ENCODE measurements at regions of chr11 and their contacts with region 1.

Region 1: GRCh38 chr11:62726915-62727763 is at the start of gene HNRNPUL2:
- DNase-seq: peak; percentile 95
- ATAC-seq: peak; percentile 90
- H3K4me3 ChIP-seq: peak within 1 kb of the TSS; percentile 100
- H3K27ac ChIP-seq: peak within 1 kb of the TSS; percentile 94
- H3K4me1 ChIP-seq: no peaks in the 10 kb centered on the region; the same call in 1 of the 2 replicates
- H3K27me3 ChIP-seq: no peaks in the 10 kb centered on the region
- CTCF ChIP-seq: no peak
- EP300 ChIP-seq: no peak
- POLR2A ChIP-seq: peak; percentile 96
- RAD21 ChIP-seq: no peak
- polyA plus RNA-seq, gene HNRNPUL2: 1.6 to 7.4 TPM

Region 2: DNA sequence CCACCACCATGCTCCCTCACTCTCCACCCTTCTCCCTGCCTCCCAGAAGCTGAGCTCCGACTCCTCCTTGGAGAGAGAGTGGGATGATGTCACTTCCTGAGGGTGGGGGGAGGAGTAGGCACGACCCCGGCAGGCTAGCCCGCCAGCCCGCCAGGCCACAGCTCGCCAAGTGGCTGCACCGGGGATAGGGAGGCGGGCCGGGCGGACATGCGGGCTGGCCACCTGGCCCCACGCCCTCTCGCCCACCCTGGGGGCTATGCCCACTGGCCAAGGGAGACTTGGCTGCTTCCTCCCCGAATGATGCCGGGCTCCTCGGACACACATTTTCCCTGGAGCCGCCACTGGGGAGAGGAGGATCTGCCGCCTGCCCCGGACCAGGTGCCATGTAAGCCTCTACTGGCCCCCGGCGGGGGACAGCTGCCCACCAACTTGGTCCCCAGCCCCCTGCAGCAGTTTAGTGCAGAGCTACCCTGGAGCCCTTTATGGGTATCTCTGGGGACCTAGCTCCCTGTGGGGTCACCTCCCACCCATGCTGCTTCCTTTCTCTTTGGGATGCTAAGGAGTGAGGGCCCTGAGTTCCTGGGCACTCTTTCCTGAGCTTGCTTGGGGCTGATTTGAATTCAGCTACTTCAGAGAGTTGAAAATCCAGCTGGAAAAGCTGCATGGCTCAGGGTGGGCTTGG is 1008.4 kb before region 1 on chr11:
- CTCF ChIA-PET with region 1: no interaction called
- POLR2A ChIA-PET with region 1: no interaction called
- RAD21 ChIA-PET with region 1: no interaction called
- SMC1A ChIA-PET with region 1: no interaction called
- in situ Hi-C with region 1: no loop called
- intact Hi-C with region 1: no loop called
- DNase-seq: no peak
- ATAC-seq: no peak
- H3K4me3 ChIP-seq: no peak overlapping the region
- H3K27ac ChIP-seq: no peak overlapping the region
- H3K4me1 ChIP-seq: no peaks in the 10 kb centered on the region
- H3K27me3 ChIP-seq: peaks cover 0 to 3% of the 10 kb centered on the region in 2 experiments; a peak in 3 of 4 replicates
- CTCF ChIP-seq: no peak
- EP300 ChIP-seq: no peak
- POLR2A ChIP-seq: no peak
- RAD21 ChIP-seq: no peak

Region 3: DNA sequence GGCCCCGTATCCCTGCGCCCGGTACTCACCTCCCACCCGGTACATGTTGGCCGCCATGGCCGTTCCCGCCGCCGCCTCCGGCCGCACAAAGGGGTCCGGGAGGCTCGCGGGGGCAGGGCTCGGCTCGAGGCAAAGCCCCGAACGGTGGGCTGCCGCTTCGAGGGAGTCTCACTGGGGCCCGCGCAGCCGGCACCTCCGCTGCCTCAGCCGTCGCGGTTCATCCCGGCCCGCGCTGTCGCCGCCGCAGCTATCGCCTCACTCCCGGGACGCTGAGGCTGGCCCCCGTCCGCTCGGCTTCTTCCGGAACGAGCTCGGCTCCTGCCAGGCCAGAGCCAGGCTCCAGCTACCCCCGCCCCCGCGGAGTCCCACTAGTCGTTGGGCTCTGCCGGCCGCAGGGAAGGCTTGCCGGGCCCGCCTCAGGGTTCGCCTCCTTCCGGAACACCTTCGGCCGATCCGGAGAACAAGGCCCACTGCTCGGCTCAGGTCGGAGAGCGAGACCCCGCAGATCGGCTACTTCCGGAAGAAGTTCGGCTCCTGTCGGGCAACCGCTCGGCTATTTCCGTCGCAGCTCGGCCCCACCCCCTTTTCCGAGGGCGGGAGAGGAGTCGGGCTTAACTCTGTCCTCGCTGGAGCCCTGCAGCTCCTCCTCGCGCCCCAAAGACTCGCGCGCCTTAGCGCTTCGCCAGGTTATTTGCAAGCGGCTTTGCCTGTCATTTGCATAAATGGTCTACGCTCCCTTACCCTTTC is 125.6 kb before region 1 on chr11 and contains the start of gene MTA2:
- CTCF ChIA-PET with region 1: no interaction called
- POLR2A ChIA-PET with region 1: interaction called, 11 read pairs
- RAD21 ChIA-PET with region 1: no interaction called
- SMC1A ChIA-PET with region 1: no interaction called
- in situ Hi-C with region 1: no loop called
- intact Hi-C with region 1: loop called (anchors 5 kb)
- DNase-seq: peak; percentile 87
- ATAC-seq: peak; percentile 92
- H3K4me3 ChIP-seq: peak within 1 kb of the TSS; percentile 91
- H3K27ac ChIP-seq: peak within 1 kb of the TSS; percentile 97
- H3K4me1 ChIP-seq: peaks cover 19% of the 10 kb centered on the region
- H3K27me3 ChIP-seq: no peaks in the 10 kb centered on the region
- CTCF ChIP-seq: 0 out of 6 replicates have a peak, but pooled peaks of 1 of the 3 experiments have one; percentile 7
- EP300 ChIP-seq: no peak
- POLR2A ChIP-seq: peak; percentile 85
- RAD21 ChIP-seq: no peak
- polyA plus RNA-seq, gene MTA2: 6.7 to 6.8 TPM

Region 4: DNA sequence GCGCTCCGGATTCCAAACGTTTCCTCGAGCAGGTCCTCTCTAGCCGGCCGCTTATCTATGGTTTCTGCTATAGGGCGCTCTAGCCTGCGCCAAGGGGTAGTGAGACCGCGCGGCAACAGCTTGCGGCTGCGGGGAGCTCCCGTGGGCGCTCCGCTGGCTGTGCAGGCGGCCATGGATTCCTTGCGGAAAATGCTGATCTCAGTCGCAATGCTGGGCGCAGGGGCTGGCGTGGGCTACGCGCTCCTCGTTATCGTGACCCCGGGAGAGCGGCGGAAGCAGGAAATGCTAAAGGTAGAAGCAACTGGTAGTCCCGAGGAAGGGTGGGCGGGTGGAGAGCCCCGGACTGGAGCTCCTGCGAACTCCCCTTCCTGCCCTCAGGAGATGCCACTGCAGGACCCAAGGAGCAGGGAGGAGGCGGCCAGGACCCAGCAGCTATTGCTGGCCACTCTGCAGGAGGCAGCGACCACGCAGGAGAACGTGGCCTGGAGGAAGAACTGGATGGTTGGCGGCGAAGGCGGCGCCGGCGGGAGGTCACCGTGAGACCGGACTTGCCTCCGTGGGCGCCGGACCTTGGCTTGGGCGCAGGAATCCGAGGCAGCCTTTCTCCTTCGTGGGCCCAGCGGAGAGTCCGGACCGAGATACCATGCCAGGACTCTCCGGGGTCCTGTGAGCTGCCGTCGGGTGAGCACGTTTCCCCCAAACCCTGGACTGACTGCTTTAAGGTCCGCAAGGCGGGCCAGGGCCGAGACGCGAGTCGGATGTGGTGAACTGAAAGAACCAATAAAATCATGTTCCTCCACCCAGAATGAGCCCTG is 55.4 kb before region 1 on chr11 and contains the starts of genes LBHD1 and UQCC3:
- CTCF ChIA-PET with region 1: no interaction called
- POLR2A ChIA-PET with region 1: interaction called, 29 read pairs
- RAD21 ChIA-PET with region 1: interaction called, 7 read pairs
- SMC1A ChIA-PET with region 1: interaction called, 4 read pairs
- in situ Hi-C with region 1: no loop called
- intact Hi-C with region 1: no loop called
- DNase-seq: no peak
- ATAC-seq: peak; percentile 89
- H3K4me3 ChIP-seq: peak within 1 kb of the TSS; percentile 88
- H3K27ac ChIP-seq: peak within 1 kb of the TSS; percentile 75
- H3K4me1 ChIP-seq: peaks cover 19% of the 10 kb centered on the region
- H3K27me3 ChIP-seq: no peaks in the 10 kb centered on the region
- CTCF ChIP-seq: no peak
- EP300 ChIP-seq: no peak
- POLR2A ChIP-seq: peak; percentile 82
- RAD21 ChIP-seq: no peak
- polyA plus RNA-seq, gene LBHD1: 0.79 to 2.4 TPM
- polyA plus RNA-seq, gene UQCC3: 2.0 to 4.6 TPM

Region 5: DNA sequence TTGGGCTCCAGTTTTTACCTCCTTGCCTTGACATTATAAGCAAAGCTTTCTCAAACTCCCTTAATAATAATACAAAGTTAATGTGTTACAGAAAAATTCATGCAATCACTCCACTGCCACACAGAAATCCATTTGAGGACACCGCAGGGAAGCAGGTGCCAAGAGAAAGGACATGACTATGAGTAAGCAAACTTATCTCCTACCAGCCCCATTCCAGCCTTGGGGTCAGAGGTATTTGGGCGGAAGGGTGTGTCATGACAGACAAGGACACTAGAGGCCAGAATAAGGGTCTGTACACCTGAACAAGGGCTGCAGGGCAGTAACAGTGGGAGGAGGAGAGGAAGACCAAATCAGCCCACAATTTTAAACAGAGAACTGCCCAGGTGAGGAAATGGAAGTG is 13.8 kb before region 1 on chr11:
- CTCF ChIA-PET with region 1: interaction called, 7 read pairs
- POLR2A ChIA-PET with region 1: interaction called, 79 read pairs
- RAD21 ChIA-PET with region 1: interaction called, 6 read pairs
- SMC1A ChIA-PET with region 1: interaction called, 26 read pairs
- in situ Hi-C with region 1: no loop called
- intact Hi-C with region 1: loop called (anchors 1 kb)
- DNase-seq: no peak
- ATAC-seq: no peak
- H3K4me3 ChIP-seq: 0 out of 2 replicates have a peak overlapping the region, but pooled peaks have one; percentile 13
- H3K27ac ChIP-seq: no peak overlapping the region
- H3K4me1 ChIP-seq: peaks cover 22% of the 10 kb centered on the region
- H3K27me3 ChIP-seq: no peaks in the 10 kb centered on the region
- CTCF ChIP-seq: no peak
- EP300 ChIP-seq: no peak
- POLR2A ChIP-seq: no peak
- RAD21 ChIP-seq: no peak

Region 6: GRCh38 chr11:62771144-62772021 is 44.2 kb after region 1 on chr11 and contains the start of gene TAF6L:
- CTCF ChIA-PET with region 1: interaction called, 34 read pairs
- POLR2A ChIA-PET with region 1: interaction called, 44 read pairs
- RAD21 ChIA-PET with region 1: interaction called, 11 read pairs
- SMC1A ChIA-PET with region 1: interaction called, 9 read pairs
- in situ Hi-C with region 1: no loop called
- intact Hi-C with region 1: loop called (anchors 5 kb)
- DNase-seq: peak; percentile 77
- ATAC-seq: peak; percentile 92
- H3K4me3 ChIP-seq: peak within 1 kb of the TSS; percentile 86
- H3K27ac ChIP-seq: peak within 1 kb of the TSS; percentile 82
- H3K4me1 ChIP-seq: peaks cover 17% of the 10 kb centered on the region
- H3K27me3 ChIP-seq: no peaks in the 10 kb centered on the region
- CTCF ChIP-seq: no peak
- EP300 ChIP-seq: 0 out of 4 replicates have a peak, but pooled peaks of 1 of the 2 experiments have one; percentile 6
- POLR2A ChIP-seq: peak; percentile 83
- RAD21 ChIP-seq: no peak
- polyA plus RNA-seq, gene TAF6L: 0.15 to 0.39 TPM

Region 7: DNA sequence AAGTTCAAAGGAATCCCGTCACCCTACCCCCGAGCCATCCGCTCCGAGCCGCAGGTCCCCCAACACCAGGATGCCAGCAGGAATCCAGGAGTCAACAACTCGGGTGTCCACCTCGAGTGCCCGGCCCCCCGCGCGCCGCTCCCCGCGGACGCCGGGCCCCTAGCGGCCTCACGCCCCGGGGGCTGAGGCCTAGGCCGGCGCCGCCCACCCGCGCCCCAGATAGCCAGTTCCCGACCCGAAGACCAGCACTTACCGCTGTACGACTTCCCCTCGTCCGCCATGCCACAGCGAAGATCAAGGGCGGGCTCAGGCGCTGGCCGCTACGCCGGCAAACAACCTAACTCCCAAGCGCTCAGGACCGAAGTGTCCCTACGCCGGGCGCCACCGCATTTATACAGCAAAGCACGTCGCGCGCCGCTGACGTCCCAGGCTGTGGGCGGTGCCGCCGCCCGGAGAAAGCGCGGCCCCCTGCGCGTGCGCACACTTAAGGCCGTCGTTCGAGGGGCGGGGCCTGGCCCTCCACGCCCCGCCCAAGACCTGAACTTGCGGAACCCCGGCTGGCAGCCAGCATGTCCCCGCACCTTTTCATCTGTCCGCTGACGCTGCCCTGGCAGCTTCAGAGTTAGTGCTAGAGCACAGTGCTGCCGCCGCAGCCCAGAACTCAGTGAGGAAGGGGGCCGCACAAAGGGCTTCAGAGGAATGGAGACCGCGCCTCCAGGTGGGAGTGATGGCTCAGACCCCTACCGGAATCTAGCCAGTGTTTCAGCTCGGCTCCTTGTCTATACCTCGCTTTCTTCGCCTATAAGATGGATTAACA is 78.1 kb after region 1 on chr11 and contains the start of gene NXF1:
- CTCF ChIA-PET with region 1: no interaction called
- POLR2A ChIA-PET with region 1: interaction called, 8 read pairs
- RAD21 ChIA-PET with region 1: no interaction called
- SMC1A ChIA-PET with region 1: no interaction called
- in situ Hi-C with region 1: no loop called
- intact Hi-C with region 1: loop called (anchors 1 kb)
- DNase-seq: peak; percentile 80
- ATAC-seq: peak; percentile 89
- H3K4me3 ChIP-seq: peak within 1 kb of the TSS; percentile 85
- H3K27ac ChIP-seq: peak within 1 kb of the TSS; percentile 86
- H3K4me1 ChIP-seq: peaks cover 16% of the 10 kb centered on the region
- H3K27me3 ChIP-seq: no peaks in the 10 kb centered on the region
- CTCF ChIP-seq: peak in 1 of 3 experiments; percentile 26; a peak in 1 of 6 replicates
- EP300 ChIP-seq: 0 out of 4 replicates have a peak, but pooled peaks of 1 of the 2 experiments have one; percentile 22
- POLR2A ChIP-seq: peak; percentile 100
- RAD21 ChIP-seq: no peak
- polyA plus RNA-seq, gene NXF1: 23.4 to 37.5 TPM

Region 8: DNA sequence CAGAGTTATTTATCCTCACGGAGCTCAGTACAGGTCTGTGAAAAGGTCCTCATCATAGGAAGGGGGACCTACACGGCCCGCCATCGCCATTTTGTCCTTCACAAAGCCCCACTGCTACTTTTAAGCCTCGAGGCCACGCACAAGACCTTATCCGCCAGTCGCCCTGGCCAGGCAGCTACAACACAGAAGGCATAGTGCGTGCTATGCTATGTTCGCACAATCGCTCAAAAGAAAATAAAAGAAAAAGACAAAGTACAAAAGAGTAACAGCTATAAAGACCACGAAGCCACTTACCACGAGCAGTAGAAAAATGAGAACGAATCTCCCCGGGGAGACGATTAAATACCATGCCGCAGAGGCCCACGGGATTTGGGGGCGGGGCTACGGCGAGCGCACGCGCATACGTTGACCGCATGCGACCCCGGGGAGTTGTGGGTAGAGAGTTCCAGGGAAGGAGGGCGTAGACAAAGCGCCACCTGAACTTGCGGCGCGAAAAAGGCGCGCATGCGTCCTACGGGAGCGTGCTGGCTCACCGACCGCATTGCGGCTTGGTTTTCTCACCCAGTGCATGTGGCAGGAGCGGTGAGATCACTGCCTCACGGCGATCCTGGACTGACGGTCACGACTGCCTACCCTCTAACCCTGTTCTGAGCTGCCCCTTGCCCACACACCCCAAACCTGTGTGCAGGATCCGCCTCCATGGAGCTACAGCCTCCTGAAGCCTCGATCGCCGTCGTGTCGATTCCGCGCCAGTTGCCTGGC is 128.6 kb after region 1 on chr11:
- CTCF ChIA-PET with region 1: interaction called, 3 read pairs
- POLR2A ChIA-PET with region 1: interaction called, 12 read pairs
- RAD21 ChIA-PET with region 1: interaction called, 15 read pairs
- SMC1A ChIA-PET with region 1: interaction called, 6 read pairs
- in situ Hi-C with region 1: no loop called
- intact Hi-C with region 1: loop called (anchors 1 kb)
- DNase-seq: peak; percentile 97
- ATAC-seq: peak; percentile 86
- H3K4me3 ChIP-seq: peak overlapping the region; percentile 98
- H3K27ac ChIP-seq: peak overlapping the region; percentile 97
- H3K4me1 ChIP-seq: peaks cover 20% of the 10 kb centered on the region
- H3K27me3 ChIP-seq: no peaks in the 10 kb centered on the region
- CTCF ChIP-seq: no peak
- EP300 ChIP-seq: peak in 1 of 2 experiments; percentile 42; a peak in 2 of 4 replicates
- POLR2A ChIP-seq: peak; percentile 99
- RAD21 ChIP-seq: no peak